Pancreas (tissue), 10 donors: ENCODE measurements at regions of chr6 and their contacts with region 1.

Region 1: GRCh38 chr6:134938896-134939295 is 11.0 kb downstream of the ALDH8A1 start:
- DNase-seq: no peak
- ATAC-seq: no peak
- H3K4me3 ChIP-seq: no peak overlapping the region
- H3K27ac ChIP-seq: no peak overlapping the region
- H3K4me1 ChIP-seq: no peaks in the 10 kb centered on the region
- H3K27me3 ChIP-seq: no peaks in the 10 kb centered on the region
- CTCF ChIP-seq: no peak

Region 2: GRCh38 chr6:134152767-134153485 is 786.0 kb before region 1 on chr6:
- intact Hi-C with region 1: loop called in 1 of 3 experiments (anchors 10 kb)
- DNase-seq: peak in 1 of 6 donors; percentile 35
- ATAC-seq: peak; percentile 50 to 81 (median 72)
- H3K4me3 ChIP-seq: no peak overlapping the region
- H3K27ac ChIP-seq: peak overlapping the region in 1 of 4 donors; percentile 0
- H3K4me1 ChIP-seq: peaks cover 5 to 8% (median 6%) of the 10 kb centered on the region in 3 donors
- H3K27me3 ChIP-seq: no peaks in the 10 kb centered on the region
- CTCF ChIP-seq: no peak

Region 3: GRCh38 chr6:134984821-134985220 is 45.9 kb after region 1 on chr6:
- intact Hi-C with region 1: no loop called
- DNase-seq: no peak
- ATAC-seq: no peak
- H3K4me3 ChIP-seq: no peak overlapping the region
- H3K27ac ChIP-seq: no peak overlapping the region
- H3K4me1 ChIP-seq: no peaks in the 10 kb centered on the region
- H3K27me3 ChIP-seq: no peaks in the 10 kb centered on the region
- CTCF ChIP-seq: no peak